ENCODE measurements at regions of chr18 and their contacts with region 1.

Region 1: GRCh38 chr18:13137670-13138419 is 80.7 kb upstream of the LDLRAD4 start:
- DNase-seq: peak; percentile 28 to 90 (median 61)
- ATAC-seq: peak; percentile 73
- H3K4me3 ChIP-seq: peak overlapping the region; percentile 84 to 98
- H3K4me3 Mint-ChIP-seq: peak overlapping the region; percentile 94
- H3K27ac ChIP-seq: peak overlapping the region; percentile 87 to 90
- H3K27ac Mint-ChIP-seq: peak overlapping the region; percentile 96
- H3K4me1 ChIP-seq: peaks cover 20% of the 10 kb centered on the region
- H3K4me1 Mint-ChIP-seq: peaks cover 28% of the 10 kb centered on the region
- H3K27me3 ChIP-seq: no peaks in the 10 kb centered on the region
- H3K27me3 Mint-ChIP-seq: no peaks in the 10 kb centered on the region
- CTCF ChIP-seq: no peak

Region 2: GRCh38 chr18:12990967-12991838 is 146.6 kb before region 1 on chr18 and contains the start of gene CEP192:
- CTCF ChIA-PET with region 1: no interaction called
- POLR2A ChIA-PET with region 1: interaction called, 4 read pairs
- intact Hi-C with region 1: loop called (anchors 1 to 5 kb)
- DNase-seq: peak; percentile 94 to 99 (median 97)
- ATAC-seq: peak; percentile 96
- H3K4me3 ChIP-seq: peak within 1 kb of the TSS; percentile 79 to 90
- H3K4me3 Mint-ChIP-seq: peak within 1 kb of the TSS; percentile 98
- H3K27ac ChIP-seq: peak within 1 kb of the TSS; percentile 57 to 75
- H3K27ac Mint-ChIP-seq: peak within 1 kb of the TSS; percentile 97
- H3K4me1 ChIP-seq: peaks cover 27% of the 10 kb centered on the region
- H3K4me1 Mint-ChIP-seq: peaks cover 17% of the 10 kb centered on the region
- H3K27me3 ChIP-seq: no peaks in the 10 kb centered on the region
- H3K27me3 Mint-ChIP-seq: no peaks in the 10 kb centered on the region
- CTCF ChIP-seq: no peak
- total RNA-seq, gene CEP192: 22.8 to 24.3 TPM

Region 3: DNA sequence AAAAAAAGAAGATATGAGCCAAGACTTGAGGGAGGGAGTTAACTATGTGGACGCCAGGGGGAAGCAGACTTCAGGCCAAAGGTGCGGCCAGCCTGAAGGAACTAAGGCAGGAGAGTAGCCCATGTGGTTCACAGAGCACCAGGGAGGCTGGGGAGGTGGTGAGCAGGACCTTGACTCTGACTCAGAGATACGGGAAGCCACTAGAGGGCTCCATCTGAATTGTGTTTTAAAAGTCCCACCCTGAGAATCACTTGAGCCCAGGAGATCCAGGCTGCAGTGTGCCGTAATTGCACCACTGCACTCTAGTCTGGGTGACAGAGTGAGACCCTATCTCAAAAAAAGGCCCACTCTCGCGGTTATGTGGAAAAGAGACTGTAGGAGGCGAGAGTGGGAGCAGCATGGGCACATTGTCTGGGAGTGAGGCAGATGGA is 134.4 kb before region 1 on chr18:
- CTCF ChIA-PET with region 1: no interaction called
- POLR2A ChIA-PET with region 1: no interaction called
- intact Hi-C with region 1: no loop called
- DNase-seq: peak in 3 of 9 experiments; percentile 6 to 30 (median 15)
- ATAC-seq: no peak
- H3K4me3 ChIP-seq: no peak overlapping the region
- H3K4me3 Mint-ChIP-seq: no peak overlapping the region
- H3K27ac ChIP-seq: no peak overlapping the region
- H3K27ac Mint-ChIP-seq: no peak overlapping the region
- H3K4me1 ChIP-seq: no peaks in the 10 kb centered on the region
- H3K4me1 Mint-ChIP-seq: peaks cover 20% of the 10 kb centered on the region
- H3K27me3 ChIP-seq: no peaks in the 10 kb centered on the region
- H3K27me3 Mint-ChIP-seq: no peaks in the 10 kb centered on the region
- CTCF ChIP-seq: peak; percentile 28